ENCODE measurements at regions of chr10 and their contacts with region 1.

Region 1: GRCh38 chr10:613271-614138 is 76.0 kb downstream of the DIP2C start:
- DNase-seq: peak; percentile 67 to 70
- H3K4me3 ChIP-seq: no peak overlapping the region
- H3K27ac ChIP-seq: no peak overlapping the region
- H3K4me1 ChIP-seq: no peaks in the 10 kb centered on the region
- H3K27me3 ChIP-seq: peaks cover 20% of the 10 kb centered on the region; the same call in 1 of the 2 replicates
- CTCF ChIP-seq: no peak

Region 2: GRCh38 chr10:546921-547391 is 66.5 kb before region 1 on chr10:
- CTCF ChIA-PET with region 1: no interaction called
- POLR2A ChIA-PET with region 1: no interaction called
- intact Hi-C with region 1: loop called (anchors 1 kb)
- DNase-seq: peak; percentile 77 to 86
- H3K4me3 ChIP-seq: no peak overlapping the region
- H3K27ac ChIP-seq: no peak overlapping the region
- H3K4me1 ChIP-seq: peaks cover 5% of the 10 kb centered on the region; the same call in 1 of the 2 replicates
- H3K27me3 ChIP-seq: peaks cover 18% of the 10 kb centered on the region
- CTCF ChIP-seq: no peak

Region 3: GRCh38 chr10:1003884-1004675 is 390.6 kb after region 1 on chr10:
- CTCF ChIA-PET with region 1: no interaction called
- POLR2A ChIA-PET with region 1: no interaction called
- intact Hi-C with region 1: no loop called
- DNase-seq: no peak
- H3K4me3 ChIP-seq: no peak overlapping the region
- H3K27ac ChIP-seq: no peak overlapping the region
- H3K4me1 ChIP-seq: no peaks in the 10 kb centered on the region
- H3K27me3 ChIP-seq: no peaks in the 10 kb centered on the region
- CTCF ChIP-seq: no peak

Measured in PC-9 (cell line).